IMR-90 (cell line): ENCODE measurements at regions of chr6 and their contacts with region 1.

Region 1: DNA sequence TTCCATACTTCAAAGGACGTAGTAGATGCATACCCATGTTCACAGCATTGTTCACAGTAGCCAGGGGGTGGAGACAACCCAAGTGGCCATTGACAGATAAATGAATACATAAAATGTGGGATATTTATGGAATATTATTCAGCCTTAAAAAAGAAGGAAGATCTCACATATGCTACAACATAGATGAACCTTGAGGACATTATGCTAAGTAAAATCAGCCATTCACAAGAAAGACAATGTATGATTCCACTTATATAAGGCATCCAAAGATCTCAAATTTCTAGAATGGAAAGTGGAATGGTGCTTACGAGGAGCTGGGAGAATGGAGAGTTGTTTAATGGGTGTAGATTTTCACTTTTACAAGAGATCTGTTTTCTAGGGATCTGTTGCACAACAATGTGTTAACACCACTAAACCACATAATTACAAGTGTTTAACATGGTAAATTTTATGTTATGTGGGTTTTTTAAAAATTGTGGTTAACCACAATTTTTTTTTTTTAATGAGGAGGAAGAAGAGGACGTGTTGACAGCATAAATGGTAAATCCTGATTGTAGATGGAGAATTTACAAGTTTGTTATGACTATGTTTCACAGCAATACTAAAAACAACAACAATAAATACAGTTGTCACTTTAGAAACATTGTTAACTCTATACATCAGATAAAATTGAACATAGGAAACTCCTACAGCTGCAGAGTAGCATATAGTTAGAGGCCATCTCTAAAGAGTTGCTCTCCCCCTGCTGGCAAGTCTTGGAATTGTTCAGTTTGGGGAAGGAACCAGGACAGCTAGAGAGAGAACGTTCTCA is 41.6 kb downstream of the CCN2 start:
- DNase-seq: peak; percentile 72
- ATAC-seq: peak; percentile 89
- H3K4me3 ChIP-seq: no peak overlapping the region
- H3K27ac ChIP-seq: no peak overlapping the region
- H3K4me1 ChIP-seq: peaks cover 3% of the 10 kb centered on the region
- H3K27me3 ChIP-seq: no peaks in the 10 kb centered on the region
- CTCF ChIP-seq: peak; percentile 86
- POLR2A ChIP-seq: no peak
- RAD21 ChIP-seq: peak; percentile 86

Region 2: GRCh38 chr6:131694831-131695426 is 214.7 kb before region 1 on chr6:
- CTCF ChIA-PET with region 1: interaction called, 30 read pairs
- POLR2A ChIA-PET with region 1: no interaction called
- dilution Hi-C with region 1: no loop called
- in situ Hi-C with region 1: loop called (anchors 5 kb)
- intact Hi-C with region 1: loop called (anchors 5 kb)
- DNase-seq: peak; percentile 79
- ATAC-seq: peak; percentile 100
- H3K4me3 ChIP-seq: no peak overlapping the region
- H3K27ac ChIP-seq: no peak overlapping the region
- H3K4me1 ChIP-seq: no peaks in the 10 kb centered on the region
- H3K27me3 ChIP-seq: no peaks in the 10 kb centered on the region; the same call in 1 of the 2 replicates
- CTCF ChIP-seq: peak; percentile 94
- POLR2A ChIP-seq: no peak
- RAD21 ChIP-seq: peak; percentile 96

Region 3: GRCh38 chr6:131787766-131788712 is 121.6 kb before region 1 on chr6:
- CTCF ChIA-PET with region 1: interaction called, 3 read pairs
- POLR2A ChIA-PET with region 1: no interaction called
- dilution Hi-C with region 1: no loop called
- in situ Hi-C with region 1: no loop called
- intact Hi-C with region 1: loop called (anchors 5 kb)
- DNase-seq: peak; percentile 72
- ATAC-seq: peak; percentile 85
- H3K4me3 ChIP-seq: no peak overlapping the region
- H3K27ac ChIP-seq: no peak overlapping the region
- H3K4me1 ChIP-seq: no peaks in the 10 kb centered on the region
- H3K27me3 ChIP-seq: no peaks in the 10 kb centered on the region
- CTCF ChIP-seq: peak; percentile 42
- POLR2A ChIP-seq: no peak
- RAD21 ChIP-seq: peak; percentile 60

Region 4: DNA sequence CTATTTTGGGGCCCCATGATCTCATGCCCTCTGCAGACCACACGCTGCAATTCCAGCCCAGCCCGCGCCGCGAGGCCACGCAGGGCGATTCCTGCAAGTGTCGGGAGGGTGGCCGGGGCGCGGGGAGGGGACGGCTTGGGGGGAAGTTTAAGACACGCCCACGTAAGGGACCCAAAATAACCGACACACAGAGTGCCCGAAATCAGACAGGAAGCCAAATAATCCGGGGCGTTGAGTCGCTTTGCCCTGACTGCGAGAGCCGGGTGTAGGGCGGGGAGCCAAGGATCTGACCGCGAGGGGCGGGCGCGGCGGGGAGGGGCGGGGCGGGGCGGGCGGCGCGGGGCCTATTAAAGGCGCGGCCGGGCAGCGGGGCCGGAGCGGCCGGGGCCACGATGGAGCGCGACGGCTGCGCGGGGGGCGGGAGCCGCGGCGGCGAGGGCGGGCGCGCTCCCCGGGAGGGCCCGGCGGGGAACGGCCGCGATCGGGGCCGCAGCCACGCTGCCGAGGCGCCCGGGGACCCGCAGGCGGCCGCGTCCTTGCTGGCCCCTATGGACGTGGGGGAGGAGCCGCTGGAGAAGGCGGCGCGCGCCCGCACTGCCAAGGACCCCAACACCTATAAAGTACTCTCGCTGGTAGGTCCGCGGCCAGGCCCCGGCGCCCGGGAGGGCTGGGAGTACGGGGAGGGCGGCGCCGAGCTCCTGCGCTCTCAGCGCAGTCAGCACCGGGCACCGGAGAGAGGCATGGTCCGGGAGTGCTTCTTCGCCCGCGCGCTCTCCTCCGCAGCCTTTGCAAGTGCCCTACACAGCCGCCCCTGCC is 101.8 kb before region 1 on chr6 and contains the start of gene ENPP1:
- CTCF ChIA-PET with region 1: no interaction called
- POLR2A ChIA-PET with region 1: no interaction called
- dilution Hi-C with region 1: no loop called
- in situ Hi-C with region 1: no loop called
- intact Hi-C with region 1: loop called (anchors 5 kb)
- DNase-seq: peak; percentile 62
- ATAC-seq: peak; percentile 89
- H3K4me3 ChIP-seq: peak within 1 kb of the TSS; percentile 74
- H3K27ac ChIP-seq: peak within 1 kb of the TSS; percentile 64
- H3K4me1 ChIP-seq: no peaks in the 10 kb centered on the region
- H3K27me3 ChIP-seq: no peaks in the 10 kb centered on the region
- CTCF ChIP-seq: no peak; the same call in 1 of the 2 replicates
- POLR2A ChIP-seq: 0 out of 2 replicates have a peak, but pooled peaks have one; percentile 27
- RAD21 ChIP-seq: peak; percentile 29; the same call in 1 of the 2 replicates
- total RNA-seq, gene ENPP1: 38.9 and 39.4 TPM in 2 replicates

Region 5: DNA sequence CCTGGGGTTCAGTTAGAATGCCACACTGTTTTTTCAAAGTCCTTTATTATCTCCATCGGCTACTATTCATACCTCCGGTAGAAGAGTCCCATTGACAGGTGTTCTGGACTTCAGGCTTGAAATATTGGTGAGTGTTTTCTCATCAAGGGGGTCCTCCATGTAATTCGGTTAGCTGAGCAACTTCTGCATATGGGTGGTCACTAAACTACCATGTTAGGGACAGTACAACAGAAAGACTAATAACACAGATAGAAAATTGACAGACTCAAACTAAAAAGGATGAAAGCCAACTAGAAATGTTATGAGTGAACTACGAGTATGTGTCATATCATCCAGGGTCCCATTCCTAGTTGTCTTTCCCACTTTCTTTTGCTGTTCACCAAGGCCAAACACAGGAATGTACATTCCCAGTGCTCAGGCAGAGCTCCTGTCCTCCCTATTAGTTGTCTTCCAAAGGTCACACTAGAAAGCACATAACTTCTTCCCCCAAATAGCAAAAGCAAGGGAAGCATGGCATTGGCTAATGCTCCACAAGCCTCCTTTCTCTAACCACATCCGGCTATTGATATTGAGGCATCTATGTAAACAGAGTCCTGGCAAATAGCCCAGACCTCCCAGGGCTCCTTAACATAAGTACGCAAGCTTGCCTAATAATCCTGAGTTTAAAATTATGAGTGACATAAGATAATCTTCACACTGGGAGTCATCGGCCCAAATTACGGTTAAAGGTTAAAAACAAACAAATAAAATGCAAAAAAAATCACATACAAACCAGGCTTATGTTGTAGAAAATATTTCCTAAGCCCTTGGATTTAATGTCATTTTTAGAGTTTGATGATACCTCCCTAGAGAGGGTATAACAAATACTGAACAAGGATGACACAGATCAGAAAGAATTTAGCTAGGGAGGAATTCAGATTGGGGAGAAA is 28.4 kb after region 1 on chr6:
- CTCF ChIA-PET with region 1: no interaction called
- POLR2A ChIA-PET with region 1: no interaction called
- dilution Hi-C with region 1: no loop called
- in situ Hi-C with region 1: no loop called
- intact Hi-C with region 1: no loop called
- DNase-seq: peak; percentile 88
- ATAC-seq: peak; percentile 80
- H3K4me3 ChIP-seq: no peak overlapping the region
- H3K27ac ChIP-seq: peak overlapping the region; percentile 38
- H3K4me1 ChIP-seq: peaks cover 8% of the 10 kb centered on the region
- H3K27me3 ChIP-seq: no peaks in the 10 kb centered on the region
- CTCF ChIP-seq: no peak
- POLR2A ChIP-seq: no peak
- RAD21 ChIP-seq: no peak